Naive thymus-derived CD4-positive, alpha-beta T cell (primary cell): ENCODE measurements at regions of chr6 and their contacts with region 1.

Region 1: GRCh38 chr6:3251462-3252314 is 7.1 kb upstream of the PSMG4 start:
- DNase-seq: peak; percentile 58 to 82 (median 76)
- ATAC-seq: peak; percentile 94
- H3K4me3 ChIP-seq: no peak overlapping the region
- H3K4me3 Mint-ChIP-seq: peak overlapping the region in 5 of 10 donors; percentile 11 to 60 (median 40)
- H3K27ac ChIP-seq: no peak overlapping the region
- H3K27ac Mint-ChIP-seq: peak overlapping the region in 1 of 9 donors; percentile 54
- H3K4me1 ChIP-seq: peaks cover 7 to 8% of the 10 kb centered on the region in 2 donors
- H3K4me1 Mint-ChIP-seq: peaks cover 6 to 12% (median 7%) of the 10 kb centered on the region in 7 donors
- H3K27me3 ChIP-seq: no peaks in the 10 kb centered on the region
- H3K27me3 Mint-ChIP-seq: peaks cover 17 to 51% (median 27%) of the 10 kb centered on the region in 5 donors

Region 2: DNA sequence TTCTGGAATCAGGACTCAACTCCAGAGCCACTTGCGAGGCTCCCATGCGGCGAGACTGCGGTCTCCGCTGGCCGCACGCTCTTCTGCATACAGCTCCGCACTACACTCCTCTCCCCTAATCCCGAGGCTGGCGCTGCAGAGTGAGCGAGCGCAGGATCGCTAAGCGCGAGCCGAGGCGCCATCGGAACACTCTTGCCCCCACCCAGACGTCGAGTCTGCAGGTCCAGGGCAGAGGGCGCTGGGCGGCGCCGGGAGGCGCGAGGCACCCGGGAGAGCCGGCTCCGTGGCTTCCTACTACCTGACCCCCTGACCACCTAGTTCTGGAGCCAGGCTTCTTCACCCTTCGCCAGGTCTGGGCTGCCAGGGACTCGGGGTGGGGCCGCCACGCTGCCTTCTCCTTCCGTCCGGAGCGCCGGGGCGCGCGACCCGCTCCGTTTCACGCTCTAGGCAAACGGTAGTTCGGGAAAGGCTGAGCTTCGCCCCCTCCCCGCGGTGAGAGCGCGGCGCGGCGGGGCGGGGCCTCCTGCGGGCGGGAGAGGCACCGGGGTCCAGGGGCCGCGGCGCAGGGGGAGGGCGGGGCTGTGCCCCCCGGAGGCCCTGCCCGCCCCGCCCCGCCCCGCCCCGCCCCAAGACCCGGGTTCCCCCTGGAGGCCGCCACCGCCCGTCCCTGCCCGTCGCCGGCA is 89.0 kb before region 1 on chr6:
- CTCF ChIA-PET with region 1: interaction called, 4 read pairs
- POLR2A ChIA-PET with region 1: no interaction called
- intact Hi-C with region 1: loop called in 1 of 2 experiments (anchors 1 kb)
- DNase-seq: peak; percentile 29 to 62 (median 51)
- ATAC-seq: peak; percentile 63
- H3K4me3 ChIP-seq: peak overlapping the region; percentile 73
- H3K4me3 Mint-ChIP-seq: peak overlapping the region; percentile 78 to 87 (median 84)
- H3K27ac ChIP-seq: peak overlapping the region; percentile 70
- H3K27ac Mint-ChIP-seq: peak overlapping the region in 8 of 9 donors; percentile 37 to 92 (median 64)
- H3K4me1 ChIP-seq: peaks cover 19 to 22% of the 10 kb centered on the region in 2 donors
- H3K4me1 Mint-ChIP-seq: peaks cover 0 to 40% (median 36%) of the 10 kb centered on the region in 7 donors
- H3K27me3 ChIP-seq: no peaks in the 10 kb centered on the region
- H3K27me3 Mint-ChIP-seq: peaks cover 0 to 68% (median 6%) of the 10 kb centered on the region in 5 donors

Region 3: DNA sequence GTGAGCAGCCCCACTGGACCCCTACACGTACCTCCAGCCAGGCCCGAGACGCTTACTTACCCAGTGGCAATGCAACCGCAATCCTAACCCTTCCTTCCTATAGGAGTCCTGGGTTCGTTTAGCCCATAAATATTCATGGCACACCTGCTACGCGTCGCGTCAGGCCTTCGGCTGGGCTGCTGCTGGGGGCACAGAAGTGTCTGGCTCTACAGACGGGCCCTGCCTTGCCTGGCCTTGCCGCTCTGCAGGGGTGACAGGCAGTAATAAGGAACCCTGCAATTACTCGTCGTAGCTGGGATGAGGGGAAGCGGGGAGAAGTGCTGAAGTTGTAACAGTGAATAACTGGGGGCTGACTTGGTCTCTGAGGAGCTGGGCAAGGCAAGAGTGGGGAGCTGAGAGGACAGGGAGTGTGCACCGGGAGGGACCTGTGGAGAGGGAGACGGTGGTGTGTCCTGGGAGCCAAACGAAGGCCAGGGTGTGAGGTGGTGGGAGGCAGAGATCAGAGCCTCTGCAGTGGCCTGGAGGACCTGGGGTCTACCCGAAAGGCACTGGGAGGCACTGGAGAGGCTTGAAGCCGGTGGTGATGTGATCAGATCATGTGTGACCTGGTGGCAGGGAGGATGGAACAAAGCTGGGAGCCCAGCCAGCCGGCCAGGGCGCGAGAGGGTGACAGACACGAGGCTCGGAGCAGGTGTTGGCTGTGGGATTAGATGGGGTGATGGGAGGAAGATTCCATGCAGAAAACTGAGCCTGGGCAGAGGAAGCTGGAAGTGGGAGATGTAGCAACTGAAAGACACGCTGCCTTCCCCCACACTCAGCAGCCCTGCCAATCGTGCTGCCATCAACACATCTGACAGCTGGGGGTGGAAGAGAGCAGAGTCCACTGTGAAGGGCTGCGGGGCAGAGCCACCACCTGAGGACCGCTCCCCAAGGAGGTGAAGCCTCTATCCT is 43.5 kb after region 1 on chr6:
- CTCF ChIA-PET with region 1: no interaction called
- POLR2A ChIA-PET with region 1: no interaction called
- intact Hi-C with region 1: no loop called
- DNase-seq: no peak
- ATAC-seq: no peak
- H3K4me3 ChIP-seq: no peak overlapping the region
- H3K4me3 Mint-ChIP-seq: no peak overlapping the region
- H3K27ac ChIP-seq: no peak overlapping the region
- H3K27ac Mint-ChIP-seq: peak overlapping the region in 2 of 9 donors; percentile 40 to 49
- H3K4me1 ChIP-seq: no peaks in the 10 kb centered on the region
- H3K4me1 Mint-ChIP-seq: peaks cover 0 to 2% (median 0%) of the 10 kb centered on the region in 7 donors
- H3K27me3 ChIP-seq: no peaks in the 10 kb centered on the region
- H3K27me3 Mint-ChIP-seq: peaks cover 0 to 3% (median 0%) of the 10 kb centered on the region in 5 donors